Heart right ventricle (tissue), 16 donors: ENCODE measurements at regions of chr9 and their contacts with region 1.

Region 1: DNA sequence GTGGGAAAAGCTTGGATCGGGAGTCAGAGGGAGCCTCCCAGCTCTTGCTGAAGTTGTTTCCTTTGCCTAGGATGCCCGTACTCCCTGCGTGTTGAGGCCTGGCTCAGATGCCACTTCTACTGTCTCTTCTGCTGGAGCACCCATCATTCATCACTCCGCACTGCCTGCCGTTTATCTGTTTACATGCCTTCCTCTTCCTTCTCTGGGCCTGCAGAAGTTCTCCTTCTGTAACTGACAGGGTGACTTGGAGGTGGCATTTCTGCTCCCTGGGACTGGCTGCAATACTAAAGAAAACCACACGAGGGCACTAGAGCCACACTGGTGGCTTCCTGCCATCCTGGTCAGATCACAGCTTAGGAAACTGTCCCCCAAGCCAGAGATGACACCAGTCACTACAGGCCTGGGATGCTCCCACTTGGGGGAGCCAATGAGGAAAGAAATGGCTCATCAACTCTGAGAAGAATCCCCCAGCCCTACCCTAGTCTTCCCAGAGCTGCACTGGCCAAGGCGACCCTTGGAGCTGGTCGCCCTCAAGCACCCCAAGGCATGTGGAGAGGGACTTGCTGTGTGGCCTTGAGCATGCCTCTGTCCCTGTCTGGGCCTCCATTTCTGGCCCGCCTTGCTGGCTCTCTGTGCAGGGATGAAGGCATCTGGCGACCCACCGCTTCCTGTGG is 9.7 kb upstream of the SLC25A51 start:
- DNase-seq: peak; percentile 75 to 81
- ATAC-seq: peak; percentile 70 to 84 (median 82)
- H3K4me3 ChIP-seq: no peak overlapping the region
- H3K27ac ChIP-seq: peak overlapping the region in 1 of 10 donors; percentile 15
- H3K4me1 ChIP-seq: peaks cover 4 to 51% (median 38%) of the 10 kb centered on the region in 9 donors
- H3K27me3 ChIP-seq: no peaks in the 10 kb centered on the region
- CTCF ChIP-seq: peak; percentile 97 to 100 (median 98)

Region 2: DNA sequence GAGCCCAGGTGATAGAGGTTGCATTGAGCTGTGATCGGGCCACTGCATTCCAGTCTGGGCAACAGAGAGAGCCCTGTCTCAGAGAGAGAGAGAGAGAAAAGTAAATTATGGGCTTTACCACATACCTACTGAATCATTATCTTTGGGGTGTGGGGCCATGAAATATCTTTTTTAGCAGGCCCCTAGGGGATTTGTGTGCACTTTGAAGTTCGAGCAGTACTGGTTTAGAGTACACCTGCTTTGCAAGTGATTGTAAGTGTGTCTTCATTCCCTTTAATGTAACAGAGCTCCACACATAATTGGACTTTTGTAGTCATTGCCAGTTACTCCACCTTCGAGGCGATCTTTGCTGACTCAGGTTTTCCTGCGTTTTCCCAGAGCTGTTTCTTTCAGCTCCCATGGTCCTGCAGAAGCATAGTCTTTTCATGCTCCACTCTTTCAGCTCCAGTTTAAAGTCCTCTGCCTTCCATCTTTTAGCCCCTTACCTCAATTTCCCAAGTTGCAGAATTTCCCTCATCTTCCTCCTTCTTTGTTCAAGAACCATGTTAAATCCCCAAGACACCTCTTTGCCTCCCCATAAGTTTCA is 286.8 kb before region 1 on chr9:
- intact Hi-C with region 1: no loop called
- DNase-seq: no peak
- ATAC-seq: no peak
- H3K4me3 ChIP-seq: no peak overlapping the region
- H3K27ac ChIP-seq: no peak overlapping the region
- H3K4me1 ChIP-seq: no peaks in the 10 kb centered on the region
- H3K27me3 ChIP-seq: no peaks in the 10 kb centered on the region
- CTCF ChIP-seq: no peak

Region 3: GRCh38 chr9:37976714-37977477 is 63.3 kb after region 1 on chr9:
- intact Hi-C with region 1: no loop called
- DNase-seq: no peak
- ATAC-seq: peak in 5 of 8 donors; percentile 32 to 77 (median 57)
- H3K4me3 ChIP-seq: no peak overlapping the region
- H3K27ac ChIP-seq: peak overlapping the region in 1 of 10 donors; percentile 31
- H3K4me1 ChIP-seq: peaks cover 0 to 22% (median 5%) of the 10 kb centered on the region in 9 donors
- H3K27me3 ChIP-seq: no peaks in the 10 kb centered on the region
- CTCF ChIP-seq: no peak

Region 4: GRCh38 chr9:37994639-37995347 is 81.2 kb after region 1 on chr9:
- intact Hi-C with region 1: loop called in 2 of 10 experiments (anchors 5 kb)
- DNase-seq: peak; percentile 75 to 82
- ATAC-seq: peak; percentile 81 to 92 (median 85)
- H3K4me3 ChIP-seq: peak overlapping the region in 6 of 10 donors; percentile 0 to 27 (median 15)
- H3K27ac ChIP-seq: peak overlapping the region in 9 of 10 donors; percentile 1 to 82 (median 52)
- H3K4me1 ChIP-seq: peaks cover 20 to 95% (median 80%) of the 10 kb centered on the region in 9 donors
- H3K27me3 ChIP-seq: no peaks in the 10 kb centered on the region
- CTCF ChIP-seq: no peak

Region 5: DNA sequence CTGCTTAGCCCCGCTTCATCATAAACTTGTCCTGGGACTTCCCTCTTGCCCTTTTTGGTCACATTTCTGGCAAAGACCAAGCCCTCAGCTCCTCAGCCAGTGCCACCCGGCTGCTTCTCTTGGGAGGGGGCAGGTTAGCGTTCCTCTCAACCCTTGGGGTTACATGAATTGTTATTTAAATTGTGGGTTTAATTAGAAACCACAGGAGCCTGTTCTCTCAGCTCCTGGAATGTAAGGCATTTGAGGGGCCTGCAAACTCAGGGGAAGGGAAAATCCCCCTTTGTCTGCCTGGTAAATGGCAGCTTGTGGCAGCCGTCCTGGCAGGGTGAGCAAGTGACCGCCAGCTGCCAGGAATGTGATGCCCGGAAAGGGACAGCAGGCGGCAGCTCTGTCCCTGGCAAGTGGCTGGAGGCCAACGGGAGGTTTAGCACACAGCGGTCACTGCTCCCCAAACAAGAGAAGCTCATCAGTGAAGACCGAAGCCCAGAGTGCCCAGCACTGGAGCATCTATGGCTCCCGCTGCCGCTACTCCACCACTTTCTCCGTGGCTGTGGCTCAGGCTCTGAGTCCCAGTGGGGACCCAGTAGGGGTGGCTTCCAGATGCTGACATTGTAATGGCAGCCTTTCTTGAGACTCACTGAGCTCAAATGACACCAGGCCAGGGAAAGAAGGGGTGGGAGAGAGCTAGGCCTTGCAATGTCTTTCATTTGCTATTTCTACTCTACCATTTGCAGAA is 103.7 kb after region 1 on chr9:
- intact Hi-C with region 1: loop called in 6 of 10 experiments (anchors 5 to 10 kb)
- DNase-seq: peak; percentile 68 to 73
- ATAC-seq: peak; percentile 63 to 87 (median 82)
- H3K4me3 ChIP-seq: no peak overlapping the region
- H3K27ac ChIP-seq: peak overlapping the region; percentile 12 to 88 (median 60)
- H3K4me1 ChIP-seq: peaks cover 33 to 79% (median 59%) of the 10 kb centered on the region in 9 donors
- H3K27me3 ChIP-seq: no peaks in the 10 kb centered on the region
- CTCF ChIP-seq: peak; percentile 27 to 61 (median 50)

Region 6: DNA sequence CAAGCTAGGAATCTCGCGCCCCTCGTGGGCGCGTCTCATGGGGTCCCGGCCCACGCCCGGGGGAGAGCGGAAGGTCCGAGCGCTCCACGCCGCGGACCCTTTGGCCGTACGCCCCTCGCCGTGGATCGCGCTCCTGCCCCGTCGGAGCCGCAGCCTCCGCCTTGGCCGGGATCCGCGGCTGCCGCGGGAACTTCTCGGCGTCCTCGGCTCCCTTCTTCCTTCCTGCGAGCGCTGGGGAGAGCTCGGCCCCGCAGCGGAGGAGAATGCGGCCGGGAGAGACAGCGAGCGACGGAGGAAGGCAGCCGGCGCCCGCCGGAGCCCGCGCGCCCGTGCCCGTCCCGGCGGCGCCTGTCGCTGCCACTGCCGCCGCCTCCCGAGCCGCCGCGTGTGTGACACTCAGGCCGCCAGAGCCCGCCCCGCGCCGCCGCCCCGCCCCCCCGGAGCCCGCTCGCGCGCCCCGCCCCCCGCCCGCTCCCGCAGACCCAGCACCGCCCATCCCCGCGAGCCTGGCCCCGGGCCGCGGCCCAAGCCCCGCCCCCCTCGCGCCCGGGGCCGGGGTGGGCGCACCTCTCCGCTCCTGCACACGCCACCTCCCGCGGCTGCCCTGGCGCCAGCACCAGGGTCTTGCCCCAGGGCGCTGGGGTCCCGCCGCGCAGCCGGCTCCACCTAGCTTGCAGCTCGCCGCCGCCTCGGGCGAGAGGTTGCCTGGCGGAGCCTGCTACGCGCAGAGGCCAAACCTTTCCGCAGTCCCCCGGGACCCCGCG is 155.4 kb after region 1 on chr9 and contains the start of gene SHB:
- intact Hi-C with region 1: loop called in 8 of 10 experiments (anchors 1 to 5 kb)
- DNase-seq: peak; percentile 82 to 88
- ATAC-seq: peak; percentile 68 to 87 (median 76)
- H3K4me3 ChIP-seq: peak within 1 kb of the TSS; percentile 78 to 99 (median 95)
- H3K27ac ChIP-seq: peak within 1 kb of the TSS; percentile 87 to 99 (median 98)
- H3K4me1 ChIP-seq: peaks cover 3 to 57% (median 44%) of the 10 kb centered on the region in 9 donors
- H3K27me3 ChIP-seq: peaks cover 0 to 16% (median 0%) of the 10 kb centered on the region in 7 donors
- CTCF ChIP-seq: peak in 5 of 9 donors; percentile 2 to 47 (median 25)
- total RNA-seq, gene SHB: 13.9 to 26.6 (median 18.0) TPM

Region 7: GRCh38 chr9:38154501-38155421 is 241.1 kb after region 1 on chr9:
- intact Hi-C with region 1: loop called in 3 of 10 experiments (anchors 5 kb)
- DNase-seq: no peak
- ATAC-seq: no peak
- H3K4me3 ChIP-seq: no peak overlapping the region
- H3K27ac ChIP-seq: no peak overlapping the region
- H3K4me1 ChIP-seq: no peaks in the 10 kb centered on the region
- H3K27me3 ChIP-seq: peaks cover 0 to 8% (median 0%) of the 10 kb centered on the region in 7 donors
- CTCF ChIP-seq: no peak

Region 8: GRCh38 chr9:38362852-38363593 is 449.4 kb after region 1 on chr9:
- intact Hi-C with region 1: loop called in 9 of 10 experiments (anchors 1 to 10 kb)
- DNase-seq: peak in 1 of 2 donors; percentile 41
- ATAC-seq: peak; percentile 70 to 88 (median 82)
- H3K4me3 ChIP-seq: peak overlapping the region in 1 of 10 donors; percentile 3
- H3K27ac ChIP-seq: no peak overlapping the region
- H3K4me1 ChIP-seq: peaks cover 0 to 7% (median 0%) of the 10 kb centered on the region in 9 donors
- H3K27me3 ChIP-seq: no peaks in the 10 kb centered on the region
- CTCF ChIP-seq: peak; percentile 14 to 77 (median 65)